ENCODE measurements at regions of chr3 and their contacts with region 1.

Region 1: GRCh38 chr3:158532099-158532734 is 38.8 kb upstream of the MLF1 start:
- DNase-seq: no peak
- ATAC-seq: no peak
- H3K4me3 Mint-ChIP-seq: no peak overlapping the region
- H3K27ac Mint-ChIP-seq: no peak overlapping the region
- H3K4me1 Mint-ChIP-seq: no peaks in the 10 kb centered on the region
- H3K27me3 Mint-ChIP-seq: no peaks in the 10 kb centered on the region
- CTCF ChIP-seq: no peak

Region 2: GRCh38 chr3:157532529-157533297 is 999.5 kb before region 1 on chr3:
- CTCF ChIA-PET with region 1: interaction called, 3 read pairs
- POLR2A ChIA-PET with region 1: no interaction called
- intact Hi-C with region 1: loop called (anchors 2 kb)
- DNase-seq: no peak
- ATAC-seq: no peak
- H3K4me3 Mint-ChIP-seq: no peak overlapping the region
- H3K27ac Mint-ChIP-seq: no peak overlapping the region
- H3K4me1 Mint-ChIP-seq: no peaks in the 10 kb centered on the region
- H3K27me3 Mint-ChIP-seq: no peaks in the 10 kb centered on the region
- CTCF ChIP-seq: no peak

Region 3: GRCh38 chr3:157865352-157866000 is 666.7 kb before region 1 on chr3:
- CTCF ChIA-PET with region 1: interaction called, 3 read pairs
- POLR2A ChIA-PET with region 1: no interaction called
- intact Hi-C with region 1: loop called (anchors 5 kb)
- DNase-seq: peak; percentile 20
- ATAC-seq: no peak
- H3K4me3 Mint-ChIP-seq: no peak overlapping the region
- H3K27ac Mint-ChIP-seq: no peak overlapping the region
- H3K4me1 Mint-ChIP-seq: no peaks in the 10 kb centered on the region
- H3K27me3 Mint-ChIP-seq: no peaks in the 10 kb centered on the region
- CTCF ChIP-seq: no peak

Region 4: DNA sequence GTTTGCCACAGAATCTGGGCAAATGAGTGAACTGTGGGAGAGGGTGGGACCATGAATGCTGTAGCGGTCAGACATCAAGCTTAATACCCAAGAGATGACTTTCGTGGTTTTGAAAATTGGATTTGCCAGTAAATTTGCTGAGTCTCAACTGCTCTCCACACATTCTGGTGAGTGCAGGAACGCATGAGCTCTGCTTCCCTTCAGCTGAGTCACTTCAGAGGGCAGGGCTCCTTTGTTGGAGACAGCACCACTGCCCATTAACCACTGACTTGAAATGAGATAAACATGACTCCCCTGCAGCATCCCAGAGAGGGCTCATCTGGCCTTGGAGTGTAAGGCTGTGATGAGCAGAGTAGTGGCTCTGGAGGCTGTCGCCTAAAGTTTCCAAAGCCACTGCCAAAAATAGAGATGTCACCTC is 177.5 kb after region 1 on chr3:
- CTCF ChIA-PET with region 1: no interaction called
- POLR2A ChIA-PET with region 1: no interaction called
- intact Hi-C with region 1: no loop called
- DNase-seq: no peak
- ATAC-seq: no peak
- H3K4me3 Mint-ChIP-seq: no peak overlapping the region
- H3K27ac Mint-ChIP-seq: no peak overlapping the region
- H3K4me1 Mint-ChIP-seq: peaks cover 5% of the 10 kb centered on the region
- H3K27me3 Mint-ChIP-seq: no peaks in the 10 kb centered on the region
- CTCF ChIP-seq: no peak